ENCODE measurements at regions of chr11 and their contacts with region 1.

Region 1: DNA sequence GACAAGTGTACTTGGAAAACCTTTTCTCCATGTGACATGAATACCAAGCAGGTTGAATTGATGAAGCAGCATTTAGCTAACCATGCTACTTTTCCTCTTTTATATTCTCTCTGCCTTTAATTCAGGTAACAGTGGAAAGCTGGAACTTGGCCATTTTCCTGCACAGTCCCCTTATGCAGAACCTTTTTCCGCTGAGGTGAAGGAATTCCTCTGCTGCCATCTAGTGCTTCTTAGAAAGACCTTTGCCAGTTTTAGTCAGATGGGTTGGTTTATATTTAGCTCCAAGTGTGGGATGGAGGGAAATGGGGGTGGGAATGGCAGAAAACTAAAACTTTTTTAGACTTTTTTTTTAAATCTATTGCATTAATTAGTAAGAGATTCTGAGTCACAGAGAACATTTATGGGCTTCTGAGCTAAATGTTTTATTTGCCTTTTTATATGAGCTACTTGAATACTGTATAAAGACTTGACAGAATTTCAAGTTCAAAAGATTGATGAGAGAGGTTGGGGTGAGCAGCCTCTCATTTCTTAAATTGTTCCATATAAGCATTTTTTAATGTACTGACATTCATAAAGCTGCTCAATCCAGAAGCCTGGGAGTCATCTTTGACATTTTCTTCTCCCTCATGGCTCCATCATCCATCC is 153.9 kb upstream of the ZC3H12C start:
- DNase-seq: peak; percentile 68
- H3K4me3 ChIP-seq: no peak overlapping the region
- H3K27ac ChIP-seq: no peak overlapping the region
- H3K4me1 ChIP-seq: peaks cover 3% of the 10 kb centered on the region
- H3K27me3 ChIP-seq: no peaks in the 10 kb centered on the region
- CTCF ChIP-seq: peak; percentile 64 to 79

Region 2: GRCh38 chr11:108135845-108136544 is 1803.3 kb before region 1 on chr11:
- CTCF ChIA-PET with region 1: interaction called, 13 read pairs
- dilution Hi-C with region 1: no loop called
- in situ Hi-C with region 1: no loop called
- intact Hi-C with region 1: no loop called
- DNase-seq: peak; percentile 43
- H3K4me3 ChIP-seq: no peak overlapping the region
- H3K27ac ChIP-seq: no peak overlapping the region
- H3K4me1 ChIP-seq: peaks cover 7% of the 10 kb centered on the region
- H3K27me3 ChIP-seq: no peaks in the 10 kb centered on the region
- CTCF ChIP-seq: peak in 1 of 2 donors; percentile 46

Region 3: GRCh38 chr11:109845437-109845836 is 93.9 kb before region 1 on chr11:
- CTCF ChIA-PET with region 1: interaction called, 3 read pairs
- dilution Hi-C with region 1: no loop called
- in situ Hi-C with region 1: loop called in 1 of 2 experiments (anchors 10 kb)
- intact Hi-C with region 1: no loop called
- DNase-seq: no peak
- H3K4me3 ChIP-seq: no peak overlapping the region
- H3K27ac ChIP-seq: no peak overlapping the region
- H3K4me1 ChIP-seq: no peaks in the 10 kb centered on the region
- H3K27me3 ChIP-seq: no peaks in the 10 kb centered on the region
- CTCF ChIP-seq: no peak

Region 4: DNA sequence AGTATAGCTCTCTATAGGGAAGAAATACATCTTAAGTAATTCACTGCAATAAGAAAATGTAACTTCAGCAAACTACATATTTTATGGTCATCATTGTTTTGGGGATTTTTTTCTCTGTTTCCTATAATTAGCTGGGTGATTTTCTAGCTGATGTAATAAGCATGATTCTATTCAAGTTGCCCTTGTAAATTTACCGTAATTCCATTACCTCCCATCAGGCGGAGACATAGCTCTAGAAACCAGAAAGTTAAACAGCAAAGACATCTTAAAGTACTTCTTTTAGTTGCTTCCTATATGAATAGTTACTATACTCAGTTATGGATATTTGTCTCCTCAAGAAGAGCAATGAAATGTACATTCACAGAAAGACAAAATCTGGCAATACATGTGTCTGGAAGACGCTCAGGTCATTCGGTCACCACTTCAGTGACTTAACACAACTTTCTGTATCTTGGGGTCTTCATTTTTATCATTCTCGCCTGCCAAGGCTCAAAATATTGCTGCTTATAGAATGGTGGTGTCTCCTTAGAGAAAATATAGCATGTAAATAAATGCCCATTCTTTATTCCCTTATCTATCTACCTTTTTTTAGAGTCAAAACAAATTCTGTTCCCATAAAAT is 86.0 kb before region 1 on chr11:
- CTCF ChIA-PET with region 1: interaction called, 28 read pairs
- dilution Hi-C with region 1: no loop called
- in situ Hi-C with region 1: loop called in 1 of 2 experiments (anchors 10 kb)
- intact Hi-C with region 1: loop called (anchors 1 kb)
- DNase-seq: peak; percentile 63
- H3K4me3 ChIP-seq: no peak overlapping the region
- H3K27ac ChIP-seq: no peak overlapping the region
- H3K4me1 ChIP-seq: peaks cover 4% of the 10 kb centered on the region
- H3K27me3 ChIP-seq: no peaks in the 10 kb centered on the region
- CTCF ChIP-seq: peak; percentile 79 to 87

Measured in mammary epithelial cell (primary cell).